Naive thymus-derived CD4-positive, alpha-beta T cell (primary cell): ENCODE measurements at regions of chr20 and their contacts with region 1.

Region 1: GRCh38 chr20:13533946-13534345 is 104.8 kb downstream of the TASP1 start:
- DNase-seq: no peak
- ATAC-seq: no peak
- H3K4me3 ChIP-seq: no peak overlapping the region
- H3K4me3 Mint-ChIP-seq: no peak overlapping the region
- H3K27ac ChIP-seq: no peak overlapping the region
- H3K27ac Mint-ChIP-seq: no peak overlapping the region
- H3K4me1 ChIP-seq: no peaks in the 10 kb centered on the region
- H3K4me1 Mint-ChIP-seq: no peaks in the 10 kb centered on the region
- H3K27me3 ChIP-seq: no peaks in the 10 kb centered on the region
- H3K27me3 Mint-ChIP-seq: no peaks in the 10 kb centered on the region

Region 2: GRCh38 chr20:12723811-12724210 is 810.1 kb before region 1 on chr20:
- CTCF ChIA-PET with region 1: no interaction called
- POLR2A ChIA-PET with region 1: no interaction called
- intact Hi-C with region 1: no loop called
- DNase-seq: no peak
- ATAC-seq: no peak
- H3K4me3 ChIP-seq: no peak overlapping the region
- H3K4me3 Mint-ChIP-seq: no peak overlapping the region
- H3K27ac ChIP-seq: no peak overlapping the region
- H3K27ac Mint-ChIP-seq: no peak overlapping the region
- H3K4me1 ChIP-seq: no peaks in the 10 kb centered on the region
- H3K4me1 Mint-ChIP-seq: peaks cover 0 to 1% (median 0%) of the 10 kb centered on the region in 7 donors
- H3K27me3 ChIP-seq: no peaks in the 10 kb centered on the region
- H3K27me3 Mint-ChIP-seq: peaks cover 0 to 4% (median 0%) of the 10 kb centered on the region in 5 donors

Region 3: DNA sequence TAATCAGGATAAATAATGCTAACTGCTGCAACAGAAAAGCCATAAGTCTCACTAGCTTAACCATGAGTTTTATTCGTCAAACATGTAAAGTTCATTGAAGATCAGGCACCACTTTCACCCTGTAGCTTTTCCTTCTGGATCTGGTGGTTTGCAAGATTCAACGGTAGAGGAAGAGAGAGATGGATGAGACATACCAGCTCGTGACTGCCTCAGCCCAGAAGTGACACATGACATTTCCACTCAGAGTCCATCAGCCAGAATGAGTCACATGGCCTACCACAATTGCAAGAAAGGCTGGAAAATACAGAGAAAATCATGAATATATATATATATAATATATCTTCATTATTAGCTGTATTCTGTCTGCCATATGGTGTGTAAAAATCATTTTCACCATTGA is 496.2 kb before region 1 on chr20:
- CTCF ChIA-PET with region 1: no interaction called
- POLR2A ChIA-PET with region 1: no interaction called
- intact Hi-C with region 1: no loop called
- DNase-seq: no peak
- ATAC-seq: no peak
- H3K4me3 ChIP-seq: no peak overlapping the region
- H3K4me3 Mint-ChIP-seq: no peak overlapping the region
- H3K27ac ChIP-seq: no peak overlapping the region
- H3K27ac Mint-ChIP-seq: no peak overlapping the region
- H3K4me1 ChIP-seq: no peaks in the 10 kb centered on the region
- H3K4me1 Mint-ChIP-seq: no peaks in the 10 kb centered on the region
- H3K27me3 ChIP-seq: no peaks in the 10 kb centered on the region
- H3K27me3 Mint-ChIP-seq: peaks cover 0 to 10% (median 0%) of the 10 kb centered on the region in 5 donors

Region 4: GRCh38 chr20:13546497-13547131 is 12.7 kb after region 1 on chr20:
- CTCF ChIA-PET with region 1: interaction called, 12 read pairs
- POLR2A ChIA-PET with region 1: interaction called, 3 read pairs
- intact Hi-C with region 1: no loop called
- DNase-seq: peak; percentile 10 to 72 (median 44)
- ATAC-seq: peak; percentile 64
- H3K4me3 ChIP-seq: no peak overlapping the region
- H3K4me3 Mint-ChIP-seq: no peak overlapping the region
- H3K27ac ChIP-seq: no peak overlapping the region
- H3K27ac Mint-ChIP-seq: no peak overlapping the region
- H3K4me1 ChIP-seq: no peaks in the 10 kb centered on the region
- H3K4me1 Mint-ChIP-seq: peaks cover 0 to 4% (median 0%) of the 10 kb centered on the region in 7 donors
- H3K27me3 ChIP-seq: no peaks in the 10 kb centered on the region
- H3K27me3 Mint-ChIP-seq: no peaks in the 10 kb centered on the region